ENCODE measurements at regions of chr10 and their contacts with region 1.

Region 1: GRCh38 chr10:7872041-7872442 is 53.7 kb downstream of the TAF3 start:
- DNase-seq: no peak
- H3K4me3 Mint-ChIP-seq: peak overlapping the region; percentile 70
- H3K27ac Mint-ChIP-seq: peak overlapping the region; percentile 62
- H3K4me1 Mint-ChIP-seq: no peaks in the 10 kb centered on the region
- H3K27me3 Mint-ChIP-seq: no peaks in the 10 kb centered on the region
- CTCF ChIP-seq: peak; percentile 53

Region 2: DNA sequence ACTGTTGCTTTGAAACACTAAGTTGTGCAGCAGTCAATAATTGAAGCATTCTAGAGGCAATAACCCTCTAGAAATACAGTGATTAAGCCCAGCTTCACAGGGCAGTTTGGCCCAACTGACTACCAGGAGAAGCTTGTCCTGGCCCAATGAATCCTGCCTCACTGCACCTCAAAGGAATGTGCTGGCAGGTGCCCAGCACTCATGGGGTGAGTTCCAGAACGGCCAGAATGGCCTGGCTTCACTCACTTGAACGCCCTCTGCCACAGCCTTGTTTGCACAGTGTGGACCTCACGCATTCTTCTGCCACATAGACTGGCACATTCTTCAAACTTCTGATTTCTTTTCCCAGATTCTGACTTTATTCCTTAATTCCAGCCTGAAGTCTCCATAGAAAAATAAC is 175.5 kb before region 1 on chr10:
- CTCF ChIA-PET with region 1: no interaction called
- intact Hi-C with region 1: no loop called
- DNase-seq: peak; percentile 64
- H3K4me3 Mint-ChIP-seq: peak overlapping the region; percentile 17
- H3K27ac Mint-ChIP-seq: peak overlapping the region; percentile 63
- H3K4me1 Mint-ChIP-seq: peaks cover 41% of the 10 kb centered on the region
- H3K27me3 Mint-ChIP-seq: no peaks in the 10 kb centered on the region
- CTCF ChIP-seq: no peak

Region 3: GRCh38 chr10:8044908-8045725 is 173.1 kb after region 1 on chr10:
- CTCF ChIA-PET with region 1: no interaction called
- intact Hi-C with region 1: loop called (anchors 5 kb)
- DNase-seq: no peak
- H3K4me3 Mint-ChIP-seq: peak overlapping the region; percentile 69
- H3K27ac Mint-ChIP-seq: peak overlapping the region; percentile 33
- H3K4me1 Mint-ChIP-seq: peaks cover 32% of the 10 kb centered on the region
- H3K27me3 Mint-ChIP-seq: peaks cover 89% of the 10 kb centered on the region
- CTCF ChIP-seq: no peak

Region 4: DNA sequence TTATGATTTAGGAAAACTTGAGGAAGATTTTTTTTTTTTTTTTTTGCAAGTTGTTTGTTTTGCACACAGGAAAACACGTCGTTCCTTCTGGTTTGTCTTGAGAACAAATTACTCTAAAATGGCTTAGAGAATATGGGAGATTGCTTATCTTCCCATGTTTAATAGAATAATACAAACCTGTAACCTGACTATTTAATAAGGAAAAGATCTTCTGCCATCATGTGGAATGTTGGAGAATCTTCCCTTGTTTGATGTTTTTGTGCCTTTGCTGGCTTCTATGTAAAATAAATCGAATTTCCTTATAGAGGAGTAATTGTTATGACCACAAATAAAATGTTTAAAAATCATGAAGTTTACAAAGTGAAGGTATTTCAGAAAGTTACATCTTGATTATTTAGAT is 1001.3 kb after region 1 on chr10:
- CTCF ChIA-PET with region 1: no interaction called
- intact Hi-C with region 1: loop called (anchors 1 kb)
- DNase-seq: no peak
- H3K4me3 Mint-ChIP-seq: no peak overlapping the region
- H3K27ac Mint-ChIP-seq: peak overlapping the region; percentile 21
- H3K4me1 Mint-ChIP-seq: peaks cover 11% of the 10 kb centered on the region
- H3K27me3 Mint-ChIP-seq: no peaks in the 10 kb centered on the region
- CTCF ChIP-seq: no peak

Region 5: GRCh38 chr10:9209105-9209798 is 1337.2 kb after region 1 on chr10:
- CTCF ChIA-PET with region 1: interaction called, 4 read pairs
- intact Hi-C with region 1: loop called (anchors 1 kb)
- DNase-seq: peak; percentile 71
- H3K4me3 Mint-ChIP-seq: no peak overlapping the region
- H3K27ac Mint-ChIP-seq: no peak overlapping the region
- H3K4me1 Mint-ChIP-seq: peaks cover 8% of the 10 kb centered on the region
- H3K27me3 Mint-ChIP-seq: no peaks in the 10 kb centered on the region
- CTCF ChIP-seq: peak; percentile 70

Measured in Calu3 (cell line).